Adrenal gland (tissue), 19 donors: ENCODE measurements at regions of chr10 and their contacts with region 1.

Region 1: DNA sequence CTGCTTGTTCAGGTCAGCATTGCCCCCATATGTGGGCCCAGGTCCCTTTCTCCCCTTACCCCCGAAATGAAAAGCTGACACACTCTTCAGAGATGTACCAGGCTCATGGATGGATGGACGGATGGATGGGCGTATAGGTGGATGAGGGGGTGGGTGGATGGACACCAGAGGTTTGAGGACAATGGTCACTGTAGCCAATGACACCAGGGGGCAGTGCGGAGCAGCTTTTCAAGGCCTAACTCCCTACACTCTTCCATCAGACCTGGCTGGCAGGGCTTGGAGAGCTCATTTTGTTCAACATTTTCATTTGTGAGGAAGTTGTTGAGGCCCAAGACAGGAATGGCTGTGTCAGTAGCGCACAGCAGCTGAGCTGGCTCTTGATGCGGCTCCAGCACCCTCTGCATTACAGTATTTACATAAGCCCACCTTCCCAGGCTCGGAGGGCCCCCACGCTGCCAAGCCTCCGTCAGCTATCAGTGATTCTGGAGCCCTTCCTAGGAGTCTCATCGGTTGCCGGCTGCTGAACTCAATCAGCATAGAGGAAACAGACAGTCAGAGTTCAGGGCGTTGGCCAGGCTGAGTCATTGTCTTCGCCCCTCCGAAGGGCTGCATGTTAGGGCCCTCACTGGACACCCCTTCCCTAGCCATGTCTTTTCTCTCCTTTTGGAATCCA is 11.6 kb upstream of the FFAR4 start:
- DNase-seq: peak; percentile 71 to 89 (median 81)
- H3K4me3 ChIP-seq: no peak overlapping the region
- H3K27ac ChIP-seq: peak overlapping the region in 1 of 5 donors; percentile 45
- H3K4me1 ChIP-seq: no peaks in the 10 kb centered on the region
- H3K27me3 ChIP-seq: no peaks in the 10 kb centered on the region
- CTCF ChIP-seq: peak; percentile 60 to 76 (median 68)
- POLR2A ChIP-seq: no peak

Region 2: DNA sequence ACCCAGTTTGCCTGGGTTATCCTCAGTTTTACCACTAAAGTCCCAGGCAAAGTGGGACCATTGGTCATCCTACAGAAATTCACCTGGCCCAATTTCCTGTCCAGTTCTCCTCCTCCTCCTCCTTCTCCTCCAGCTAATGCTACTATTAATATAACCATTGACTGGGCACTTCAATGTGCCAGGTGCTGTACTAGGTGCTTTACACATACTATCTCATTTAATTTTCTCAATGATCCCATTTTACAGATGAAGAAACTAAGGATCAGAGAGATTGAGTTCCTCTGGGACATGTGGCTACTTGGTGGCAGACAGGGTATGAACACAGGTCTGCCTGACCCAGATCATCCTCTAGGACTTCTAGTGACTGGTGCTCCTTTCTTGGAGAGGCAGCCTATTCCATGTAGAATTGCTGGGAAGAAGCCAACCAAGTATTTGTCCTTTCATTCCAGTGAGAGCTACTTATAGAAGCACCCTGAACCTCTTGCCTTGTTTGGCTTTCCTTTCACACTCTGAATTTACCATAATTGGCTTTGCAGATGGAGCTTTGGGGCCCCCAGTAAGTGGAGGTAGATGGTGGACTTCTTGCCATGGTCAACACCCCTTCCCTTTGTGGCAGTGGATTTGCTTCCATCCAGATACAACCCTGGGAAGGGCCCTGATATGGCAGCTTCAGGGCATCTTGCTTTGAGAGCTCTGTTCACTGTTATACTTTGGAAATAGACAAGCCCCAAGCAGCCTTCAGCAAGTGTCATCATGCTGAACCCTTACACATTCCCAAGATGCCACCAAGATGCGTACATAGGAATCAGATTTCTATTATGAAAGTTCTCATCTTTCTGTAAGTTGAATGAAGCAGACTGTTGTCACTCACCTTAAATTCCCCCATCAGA is 151.5 kb before region 1 on chr10:
- intact Hi-C with region 1: no loop called
- DNase-seq: no peak
- H3K4me3 ChIP-seq: no peak overlapping the region
- H3K27ac ChIP-seq: no peak overlapping the region
- H3K4me1 ChIP-seq: no peaks in the 10 kb centered on the region
- H3K27me3 ChIP-seq: no peaks in the 10 kb centered on the region
- CTCF ChIP-seq: no peak
- POLR2A ChIP-seq: no peak

Region 3: DNA sequence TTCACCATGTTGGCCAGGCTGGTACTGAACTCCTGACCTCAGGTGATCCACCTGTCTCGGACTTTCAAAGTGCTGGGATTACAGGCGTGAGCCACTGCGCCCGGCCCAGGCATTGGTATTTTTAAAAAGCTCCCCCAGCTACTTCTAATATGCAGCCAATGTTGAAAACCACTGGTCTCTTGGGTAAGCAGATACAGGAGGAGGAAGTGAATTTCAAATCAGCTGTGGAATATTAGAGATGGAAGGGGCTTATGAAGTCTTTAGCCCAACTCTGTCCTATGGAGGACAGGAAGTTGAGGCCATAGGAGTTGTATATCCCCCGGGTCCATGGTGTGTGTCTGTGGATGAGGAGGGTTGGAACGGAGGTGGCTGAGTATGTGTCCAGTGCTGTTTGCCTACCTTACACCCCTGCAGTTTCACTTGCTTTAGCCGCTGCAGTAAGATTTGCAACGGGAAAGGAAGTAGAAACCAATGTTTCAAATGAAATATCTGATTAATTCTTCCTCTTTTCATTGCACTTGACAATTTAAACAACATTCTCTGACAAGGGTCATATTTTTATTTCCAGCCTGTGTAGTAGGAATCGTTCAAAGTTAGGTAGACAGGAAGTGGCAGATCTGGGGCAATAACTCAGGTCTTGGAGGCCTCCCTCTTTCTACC is 60.8 kb after region 1 on chr10:
- intact Hi-C with region 1: no loop called
- DNase-seq: no peak
- H3K4me3 ChIP-seq: no peak overlapping the region
- H3K27ac ChIP-seq: peak overlapping the region in 2 of 5 donors; percentile 12 to 58
- H3K4me1 ChIP-seq: no peaks in the 10 kb centered on the region
- H3K27me3 ChIP-seq: no peaks in the 10 kb centered on the region
- CTCF ChIP-seq: no peak
- POLR2A ChIP-seq: no peak

Region 4: GRCh38 chr10:93630625-93631557 is 76.0 kb after region 1 on chr10:
- intact Hi-C with region 1: no loop called
- DNase-seq: no peak
- H3K4me3 ChIP-seq: no peak overlapping the region
- H3K27ac ChIP-seq: no peak overlapping the region
- H3K4me1 ChIP-seq: no peaks in the 10 kb centered on the region
- H3K27me3 ChIP-seq: no peaks in the 10 kb centered on the region
- CTCF ChIP-seq: no peak
- POLR2A ChIP-seq: no peak

Region 5: DNA sequence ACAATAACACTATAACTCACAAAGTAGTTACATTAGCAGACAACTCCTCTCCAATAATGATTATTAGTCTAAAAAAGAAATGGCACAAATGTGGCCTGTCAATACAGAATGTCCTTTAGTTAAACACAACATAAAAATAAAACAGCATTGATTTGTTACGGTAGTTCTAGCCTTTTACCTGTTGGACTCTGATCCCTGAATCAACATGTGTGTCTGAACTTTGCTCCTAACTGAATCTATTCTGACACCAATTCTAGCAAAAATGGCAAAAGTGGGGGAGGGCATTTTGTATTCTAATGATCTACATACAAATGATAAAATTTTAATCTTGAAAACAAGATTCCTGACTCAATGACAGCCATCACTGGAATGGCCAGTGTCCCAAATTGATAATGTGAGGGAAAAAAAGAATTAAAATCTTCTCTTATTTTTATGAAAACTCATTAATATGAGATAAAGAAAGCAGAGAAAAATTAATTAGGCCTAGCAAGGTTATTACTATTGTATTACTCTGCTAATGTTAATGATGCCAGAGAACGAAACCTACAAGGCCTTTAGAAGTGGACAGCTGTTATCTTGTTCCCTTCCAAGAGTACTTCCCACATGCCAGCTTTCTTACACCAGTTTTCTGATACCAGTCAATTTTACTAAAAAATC is 117.3 kb after region 1 on chr10:
- intact Hi-C with region 1: loop called in 1 of 2 experiments (anchors 10 kb)
- DNase-seq: no peak
- H3K4me3 ChIP-seq: no peak overlapping the region
- H3K27ac ChIP-seq: no peak overlapping the region
- H3K4me1 ChIP-seq: peaks cover 4 to 7% of the 10 kb centered on the region in 2 donors
- H3K27me3 ChIP-seq: no peaks in the 10 kb centered on the region
- CTCF ChIP-seq: no peak
- POLR2A ChIP-seq: no peak

Region 6: DNA sequence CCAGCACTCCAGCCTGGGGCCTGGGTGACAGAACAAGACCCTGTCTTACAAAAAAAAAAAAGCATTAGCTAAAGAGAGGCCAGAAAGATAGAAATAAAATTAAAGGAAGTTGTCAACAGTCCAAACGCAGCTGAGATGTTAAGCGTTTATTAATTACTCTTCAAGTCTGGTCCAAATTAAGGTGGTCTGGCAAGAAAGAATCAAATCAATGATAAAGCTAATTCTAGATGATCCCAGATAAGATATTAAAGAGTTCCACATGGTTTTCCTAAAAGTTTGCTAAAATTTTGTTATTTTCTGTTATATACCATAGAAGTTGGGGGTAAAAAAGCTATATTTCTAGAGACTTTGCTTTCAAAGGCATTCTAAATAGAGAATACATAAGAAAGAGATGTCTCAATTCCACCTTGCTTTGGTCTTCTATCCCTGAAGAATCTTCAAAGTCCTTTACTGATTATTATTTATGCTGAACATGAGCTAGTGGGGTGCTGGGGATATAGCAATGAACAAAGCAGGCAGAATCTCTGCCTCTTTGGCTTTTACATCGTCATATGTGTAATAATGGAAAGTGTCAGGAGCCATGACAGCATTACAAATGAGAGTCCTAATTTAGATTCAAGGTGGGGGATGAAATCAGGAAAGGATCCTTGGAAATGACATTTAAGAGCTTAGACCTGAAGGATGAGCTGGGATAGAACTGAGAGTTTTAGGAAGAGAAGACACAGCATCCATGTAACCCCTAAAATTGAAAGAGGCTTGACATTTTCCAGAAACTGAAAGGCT is 124.1 kb after region 1 on chr10:
- intact Hi-C with region 1: loop called (anchors 2 to 10 kb)
- DNase-seq: no peak
- H3K4me3 ChIP-seq: no peak overlapping the region
- H3K27ac ChIP-seq: no peak overlapping the region
- H3K4me1 ChIP-seq: no peaks in the 10 kb centered on the region
- H3K27me3 ChIP-seq: no peaks in the 10 kb centered on the region
- CTCF ChIP-seq: no peak
- POLR2A ChIP-seq: no peak